Mammary epithelial cell (primary cell): ENCODE measurements at regions of chr2 and their contacts with region 1.

Region 1: GRCh38 chr2:119028327-119029174 is 86.6 kb downstream of the MARCO start:
- DNase-seq: peak; percentile 35
- H3K4me3 ChIP-seq: no peak overlapping the region
- H3K27ac ChIP-seq: no peak overlapping the region
- H3K4me1 ChIP-seq: no peaks in the 10 kb centered on the region
- H3K27me3 ChIP-seq: peaks cover 6% of the 10 kb centered on the region
- CTCF ChIP-seq: peak; percentile 65 to 73

Region 2: GRCh38 chr2:119066272-119066804 is 37.8 kb after region 1 on chr2:
- CTCF ChIA-PET with region 1: no interaction called
- dilution Hi-C with region 1: no loop called
- in situ Hi-C with region 1: no loop called
- intact Hi-C with region 1: no loop called
- DNase-seq: peak; percentile 64
- H3K4me3 ChIP-seq: no peak overlapping the region
- H3K27ac ChIP-seq: no peak overlapping the region
- H3K4me1 ChIP-seq: no peaks in the 10 kb centered on the region
- H3K27me3 ChIP-seq: no peaks in the 10 kb centered on the region
- CTCF ChIP-seq: no peak

Region 3: DNA sequence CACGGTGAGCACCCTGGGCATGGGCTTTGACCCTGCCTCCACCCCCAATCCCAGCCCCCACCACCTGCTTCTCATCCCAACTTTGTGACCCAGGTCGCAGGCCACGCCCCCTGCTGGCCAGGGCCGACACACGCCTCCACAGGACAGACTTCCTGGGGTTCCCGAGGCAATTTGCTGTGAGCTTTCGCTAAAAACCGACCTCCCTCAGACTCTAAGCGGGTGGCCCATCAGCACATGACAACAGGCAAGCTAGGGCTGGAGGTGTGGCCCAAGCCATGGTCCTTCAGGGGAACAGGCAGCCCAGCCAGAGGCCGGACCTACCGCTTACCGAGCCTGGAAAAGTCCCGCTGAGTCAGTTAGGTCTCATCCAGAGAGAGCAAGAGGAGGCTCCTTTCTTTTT is 98.1 kb after region 1 on chr2:
- CTCF ChIA-PET with region 1: interaction called, 22 read pairs
- dilution Hi-C with region 1: no loop called
- in situ Hi-C with region 1: no loop called
- intact Hi-C with region 1: no loop called
- DNase-seq: peak; percentile 32
- H3K4me3 ChIP-seq: no peak overlapping the region
- H3K27ac ChIP-seq: no peak overlapping the region
- H3K4me1 ChIP-seq: no peaks in the 10 kb centered on the region
- H3K27me3 ChIP-seq: no peaks in the 10 kb centered on the region
- CTCF ChIP-seq: peak; percentile 40 to 72

Region 4: DNA sequence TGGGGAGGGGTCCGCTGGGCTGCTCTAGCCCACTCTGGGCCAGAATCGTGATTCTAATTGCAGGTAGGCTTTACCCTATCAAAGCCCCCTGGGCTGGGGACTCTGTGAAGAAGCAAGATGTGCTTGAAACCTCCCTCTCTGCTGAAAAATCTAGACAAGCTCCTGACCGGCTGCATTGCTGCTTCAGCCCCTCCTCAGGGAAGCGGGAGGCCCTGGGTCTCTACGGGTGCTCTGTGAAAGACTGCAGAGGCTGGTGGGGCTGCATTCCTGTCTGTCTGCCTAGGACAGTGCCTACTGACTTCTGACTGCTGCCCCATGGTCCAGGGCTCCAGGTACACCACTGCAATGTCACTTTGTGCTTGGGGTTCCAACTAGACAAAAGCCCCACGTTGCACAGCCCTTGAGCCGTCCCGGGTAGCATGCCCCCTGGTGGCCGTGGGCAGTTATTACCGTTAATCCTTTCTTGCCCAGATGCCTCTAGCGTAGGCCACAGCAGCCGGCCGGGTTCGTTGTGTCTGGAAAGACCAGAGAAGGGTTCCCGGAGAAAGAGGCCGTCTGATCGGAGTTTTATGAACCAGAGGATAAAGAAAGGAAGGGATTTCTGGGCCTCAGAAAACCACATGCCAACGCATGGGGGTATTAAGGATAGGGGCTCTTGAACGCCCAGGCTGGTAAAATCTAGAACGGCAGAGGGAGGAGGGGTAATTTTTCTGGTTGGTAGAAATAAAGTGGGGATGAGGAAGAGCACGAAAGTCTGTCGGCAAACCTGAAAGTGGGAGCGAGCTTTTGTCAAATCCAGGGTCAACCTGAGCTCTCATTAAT is 145.9 kb after region 1 on chr2:
- CTCF ChIA-PET with region 1: no interaction called
- dilution Hi-C with region 1: no loop called
- in situ Hi-C with region 1: no loop called
- intact Hi-C with region 1: loop called (anchors 1 kb)
- DNase-seq: peak; percentile 13
- H3K4me3 ChIP-seq: no peak overlapping the region
- H3K27ac ChIP-seq: no peak overlapping the region
- H3K4me1 ChIP-seq: peaks cover 11% of the 10 kb centered on the region
- H3K27me3 ChIP-seq: no peaks in the 10 kb centered on the region
- CTCF ChIP-seq: peak; percentile 82 to 84

Region 5: GRCh38 chr2:119264781-119265692 is 236.5 kb after region 1 on chr2:
- CTCF ChIA-PET with region 1: no interaction called
- dilution Hi-C with region 1: no loop called
- in situ Hi-C with region 1: loop called in 1 of 2 experiments (anchors 25 kb)
- intact Hi-C with region 1: loop called (anchors 1 kb)
- DNase-seq: peak; percentile 53
- H3K4me3 ChIP-seq: no peak overlapping the region
- H3K27ac ChIP-seq: no peak overlapping the region
- H3K4me1 ChIP-seq: no peaks in the 10 kb centered on the region
- H3K27me3 ChIP-seq: no peaks in the 10 kb centered on the region
- CTCF ChIP-seq: peak; percentile 88 to 94

Region 6: DNA sequence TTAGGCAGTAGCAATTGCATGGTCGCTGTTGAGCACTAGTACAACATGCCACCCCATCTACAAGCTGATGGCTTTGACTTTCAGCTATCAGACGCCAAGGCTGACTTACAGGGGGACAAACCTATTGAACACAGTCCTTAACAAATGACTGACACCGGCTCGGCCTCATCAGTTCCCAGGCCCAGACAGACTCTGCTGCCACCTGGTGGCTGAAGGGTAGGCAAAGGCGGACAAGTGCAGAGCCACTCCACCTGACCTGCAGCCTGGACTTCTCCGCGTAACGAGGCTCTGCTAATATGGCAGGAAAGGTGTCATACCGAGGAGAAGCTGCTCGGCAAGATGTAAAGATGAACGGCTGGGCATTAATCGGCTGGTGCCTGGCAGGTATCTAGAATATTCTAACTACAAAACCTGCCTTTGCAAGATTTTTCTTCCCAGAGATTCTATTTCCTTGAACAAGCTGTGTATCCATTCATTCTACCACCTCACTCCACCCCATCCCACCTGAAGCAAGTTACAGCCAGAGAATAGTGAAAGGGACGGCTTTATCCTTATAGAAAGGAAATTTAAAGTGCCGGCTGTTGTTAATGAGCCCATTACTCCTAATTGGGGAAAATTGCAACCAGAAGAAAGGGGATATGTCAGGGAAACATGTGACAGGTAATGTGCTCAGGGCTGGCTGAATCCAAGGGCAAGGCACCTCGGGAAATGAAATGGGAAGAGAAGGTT is 262.5 kb after region 1 on chr2:
- CTCF ChIA-PET with region 1: no interaction called
- dilution Hi-C with region 1: no loop called
- in situ Hi-C with region 1: no loop called
- intact Hi-C with region 1: loop called (anchors 1 kb)
- DNase-seq: peak; percentile 12
- H3K4me3 ChIP-seq: no peak overlapping the region
- H3K27ac ChIP-seq: no peak overlapping the region
- H3K4me1 ChIP-seq: no peaks in the 10 kb centered on the region
- H3K27me3 ChIP-seq: no peaks in the 10 kb centered on the region
- CTCF ChIP-seq: peak; percentile 24 to 64